Activated CD4-positive, alpha-beta T cell treated with anti-CD3 and anti-CD28 coated beads, Interleukin-2, amount 10 ng/mL, durations not matched to agents 24 days and 14 days (primary cell): ENCODE measurements at regions of chr1 and their contacts with region 1.

Region 1: GRCh38 chr1:171794085-171794484 is 12.6 kb downstream of the METTL13 start:
- DNase-seq: peak; percentile 82
- H3K4me3 Mint-ChIP-seq: peak overlapping the region; percentile 51
- H3K27ac Mint-ChIP-seq: peak overlapping the region; percentile 91
- H3K4me1 Mint-ChIP-seq: peaks cover 22% of the 10 kb centered on the region
- H3K27me3 Mint-ChIP-seq: no peaks in the 10 kb centered on the region

Region 2: GRCh38 chr1:171781176-171781875 is 12.8 kb before region 1 on chr1 and contains the start of gene METTL13:
- intact Hi-C with region 1: loop called (anchors 1 kb)
- DNase-seq: peak; percentile 100
- H3K4me3 Mint-ChIP-seq: peak within 1 kb of the TSS; percentile 98
- H3K27ac Mint-ChIP-seq: peak within 1 kb of the TSS; percentile 94
- H3K4me1 Mint-ChIP-seq: peaks cover 45% of the 10 kb centered on the region
- H3K27me3 Mint-ChIP-seq: no peaks in the 10 kb centered on the region
- total RNA-seq, gene METTL13: 56.1 and 57.8 TPM in 2 replicates